Mammary epithelial cell (primary cell): ENCODE measurements at regions of chr6 and their contacts with region 1.

Region 1: GRCh38 chr6:53484476-53485280 is 60.2 kb downstream of the GCLC start:
- DNase-seq: peak; percentile 43
- H3K4me3 ChIP-seq: no peak overlapping the region
- H3K27ac ChIP-seq: no peak overlapping the region
- H3K4me1 ChIP-seq: no peaks in the 10 kb centered on the region
- H3K27me3 ChIP-seq: no peaks in the 10 kb centered on the region
- CTCF ChIP-seq: peak; percentile 93 to 96

Region 2: GRCh38 chr6:53103992-53104675 is 380.5 kb before region 1 on chr6:
- CTCF ChIA-PET with region 1: no interaction called
- dilution Hi-C with region 1: no loop called
- in situ Hi-C with region 1: no loop called
- intact Hi-C with region 1: loop called (anchors 1 kb)
- DNase-seq: peak; percentile 28
- H3K4me3 ChIP-seq: no peak overlapping the region
- H3K27ac ChIP-seq: no peak overlapping the region
- H3K4me1 ChIP-seq: peaks cover 7% of the 10 kb centered on the region
- H3K27me3 ChIP-seq: no peaks in the 10 kb centered on the region
- CTCF ChIP-seq: peak in 1 of 2 donors; percentile 44

Region 3: GRCh38 chr6:53348371-53349208 is 136.1 kb before region 1 on chr6 and contains the start of gene ELOVL5:
- CTCF ChIA-PET with region 1: no interaction called
- dilution Hi-C with region 1: no loop called
- in situ Hi-C with region 1: no loop called
- intact Hi-C with region 1: loop called (anchors 5 kb)
- DNase-seq: peak; percentile 96
- H3K4me3 ChIP-seq: peak within 1 kb of the TSS; percentile 81 to 92 (median 85)
- H3K27ac ChIP-seq: peak within 1 kb of the TSS; percentile 74
- H3K4me1 ChIP-seq: peaks cover 7% of the 10 kb centered on the region
- H3K27me3 ChIP-seq: no peaks in the 10 kb centered on the region
- CTCF ChIP-seq: no peak
- total RNA-seq, gene ELOVL5: 50.8 to 71.1 TPM

Region 4: GRCh38 chr6:53437557-53438202 is 47.0 kb before region 1 on chr6:
- CTCF ChIA-PET with region 1: no interaction called
- dilution Hi-C with region 1: no loop called
- in situ Hi-C with region 1: no loop called
- intact Hi-C with region 1: loop called (anchors 1 kb)
- DNase-seq: peak; percentile 75
- H3K4me3 ChIP-seq: no peak overlapping the region
- H3K27ac ChIP-seq: no peak overlapping the region
- H3K4me1 ChIP-seq: peaks cover 2% of the 10 kb centered on the region
- H3K27me3 ChIP-seq: no peaks in the 10 kb centered on the region
- CTCF ChIP-seq: peak; percentile 67 to 74